Breast epithelium (tissue), 4 donors: ENCODE measurements at regions of chr3 and their contacts with region 1.

Region 1: GRCh38 chr3:101611023-101611422 is 37.0 kb downstream of the PCNP start:
- DNase-seq: no peak
- H3K4me3 ChIP-seq: no peak overlapping the region
- H3K27ac ChIP-seq: no peak overlapping the region
- H3K4me1 ChIP-seq: no peaks in the 10 kb centered on the region
- H3K27me3 ChIP-seq: no peaks in the 10 kb centered on the region
- CTCF ChIP-seq: no peak
- POLR2A ChIP-seq: no peak

Region 2: GRCh38 chr3:100913870-100914648 is 697.0 kb before region 1 on chr3:
- intact Hi-C with region 1: loop called (anchors 5 kb)
- DNase-seq: no peak
- H3K4me3 ChIP-seq: no peak overlapping the region
- H3K27ac ChIP-seq: no peak overlapping the region
- H3K4me1 ChIP-seq: no peaks in the 10 kb centered on the region
- H3K27me3 ChIP-seq: no peaks in the 10 kb centered on the region
- CTCF ChIP-seq: no peak
- POLR2A ChIP-seq: no peak

Region 3: GRCh38 chr3:101573449-101574387 is 37.3 kb before region 1 on chr3 and contains the start of gene PCNP:
- intact Hi-C with region 1: no loop called
- DNase-seq: peak; percentile 98
- H3K4me3 ChIP-seq: peak within 1 kb of the TSS; percentile 79 to 95 (median 88)
- H3K27ac ChIP-seq: peak within 1 kb of the TSS; percentile 96 to 100
- H3K4me1 ChIP-seq: peaks cover 0 to 7% of the 10 kb centered on the region in 2 donors
- H3K27me3 ChIP-seq: no peaks in the 10 kb centered on the region
- CTCF ChIP-seq: peak; percentile 79 to 93 (median 92)
- POLR2A ChIP-seq: peak; percentile 89
- total RNA-seq, gene PCNP: 96.2 to 127 (median 120) TPM